ENCODE measurements at regions of chr7 and their contacts with region 1.

Region 1: DNA sequence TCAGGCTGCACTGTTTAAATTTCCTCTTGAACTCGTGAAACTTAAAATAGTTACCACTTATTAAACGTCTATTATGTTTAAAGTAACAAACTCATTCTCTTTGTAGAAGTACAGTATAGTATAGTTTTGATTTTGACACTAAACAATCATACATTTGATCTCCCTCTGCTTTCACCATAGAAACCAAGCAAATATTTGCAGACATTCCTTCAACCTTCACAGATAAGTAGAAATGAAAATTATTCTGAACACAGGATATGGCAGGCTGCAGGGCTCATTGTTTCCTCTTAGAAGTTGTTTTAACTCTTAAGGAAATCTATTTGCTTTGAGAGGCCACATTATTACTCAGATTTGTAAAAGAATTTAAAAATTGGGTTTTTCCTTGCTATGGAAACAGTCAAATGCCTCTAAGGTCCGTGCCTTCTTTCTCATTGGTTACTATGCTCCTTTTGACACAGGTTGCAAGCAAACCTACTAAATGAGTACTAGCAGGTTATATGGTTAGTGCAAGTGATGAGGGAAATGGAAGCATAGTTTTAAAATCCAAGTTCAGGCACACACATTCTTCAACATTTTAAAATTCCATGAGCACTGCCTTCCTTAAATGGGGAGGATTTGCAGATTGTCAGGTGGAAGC is 92.8 kb upstream of the FAM133B start:
- DNase-seq: peak; percentile 75
- H3K4me3 Mint-ChIP-seq: peak overlapping the region; percentile 47
- H3K27ac Mint-ChIP-seq: peak overlapping the region; percentile 96
- H3K4me1 Mint-ChIP-seq: peaks cover 79% of the 10 kb centered on the region
- H3K27me3 Mint-ChIP-seq: no peaks in the 10 kb centered on the region

Region 2: GRCh38 chr7:92336662-92337340 is 346.2 kb before region 1 on chr7:
- intact Hi-C with region 1: no loop called
- DNase-seq: no peak
- H3K4me3 Mint-ChIP-seq: no peak overlapping the region
- H3K27ac Mint-ChIP-seq: no peak overlapping the region
- H3K4me1 Mint-ChIP-seq: no peaks in the 10 kb centered on the region
- H3K27me3 Mint-ChIP-seq: no peaks in the 10 kb centered on the region

Region 3: GRCh38 chr7:92598310-92598981 is 84.6 kb before region 1 on chr7:
- intact Hi-C with region 1: no loop called
- DNase-seq: no peak
- H3K4me3 Mint-ChIP-seq: no peak overlapping the region
- H3K27ac Mint-ChIP-seq: no peak overlapping the region
- H3K4me1 Mint-ChIP-seq: peaks cover 4% of the 10 kb centered on the region
- H3K27me3 Mint-ChIP-seq: no peaks in the 10 kb centered on the region

Region 4: DNA sequence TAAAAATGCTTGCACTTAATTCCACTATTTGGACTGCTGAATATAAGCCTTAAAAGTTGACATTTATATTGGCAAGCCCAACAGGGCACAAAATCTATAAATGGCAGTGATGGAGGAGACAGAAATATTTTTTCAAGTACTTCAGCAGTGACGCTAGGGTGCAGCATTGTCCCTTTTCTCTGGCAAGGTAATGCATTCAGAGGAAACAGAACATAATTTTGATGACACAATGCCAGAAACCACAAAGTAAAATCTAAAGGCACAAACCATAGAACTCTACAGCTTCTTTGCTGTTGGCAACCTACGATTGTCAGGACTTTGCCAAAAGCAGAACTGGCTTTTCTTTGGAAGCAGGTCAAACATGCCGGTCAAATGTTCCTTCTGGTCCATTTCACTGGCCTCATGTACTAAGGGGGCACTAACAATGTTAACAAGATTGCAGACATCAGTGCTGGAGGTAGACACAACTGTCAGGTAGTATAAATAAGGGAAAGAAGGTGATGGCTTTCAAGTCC is 61.9 kb before region 1 on chr7:
- intact Hi-C with region 1: loop called (anchors 1 kb)
- DNase-seq: peak; percentile 93
- H3K4me3 Mint-ChIP-seq: peak overlapping the region; percentile 71
- H3K27ac Mint-ChIP-seq: peak overlapping the region; percentile 95
- H3K4me1 Mint-ChIP-seq: peaks cover 46% of the 10 kb centered on the region
- H3K27me3 Mint-ChIP-seq: no peaks in the 10 kb centered on the region

Region 5: GRCh38 chr7:92641921-92642511 is 41.0 kb before region 1 on chr7:
- intact Hi-C with region 1: loop called (anchors 2 kb)
- DNase-seq: peak; percentile 87
- H3K4me3 Mint-ChIP-seq: peak overlapping the region; percentile 77
- H3K27ac Mint-ChIP-seq: peak overlapping the region; percentile 97
- H3K4me1 Mint-ChIP-seq: peaks cover 81% of the 10 kb centered on the region
- H3K27me3 Mint-ChIP-seq: no peaks in the 10 kb centered on the region

Region 6: GRCh38 chr7:92648067-92648466 is 35.0 kb before region 1 on chr7:
- intact Hi-C with region 1: loop called (anchors 1 kb)
- DNase-seq: no peak
- H3K4me3 Mint-ChIP-seq: peak overlapping the region; percentile 70
- H3K27ac Mint-ChIP-seq: peak overlapping the region; percentile 97
- H3K4me1 Mint-ChIP-seq: peaks cover 78% of the 10 kb centered on the region
- H3K27me3 Mint-ChIP-seq: no peaks in the 10 kb centered on the region

Region 7: DNA sequence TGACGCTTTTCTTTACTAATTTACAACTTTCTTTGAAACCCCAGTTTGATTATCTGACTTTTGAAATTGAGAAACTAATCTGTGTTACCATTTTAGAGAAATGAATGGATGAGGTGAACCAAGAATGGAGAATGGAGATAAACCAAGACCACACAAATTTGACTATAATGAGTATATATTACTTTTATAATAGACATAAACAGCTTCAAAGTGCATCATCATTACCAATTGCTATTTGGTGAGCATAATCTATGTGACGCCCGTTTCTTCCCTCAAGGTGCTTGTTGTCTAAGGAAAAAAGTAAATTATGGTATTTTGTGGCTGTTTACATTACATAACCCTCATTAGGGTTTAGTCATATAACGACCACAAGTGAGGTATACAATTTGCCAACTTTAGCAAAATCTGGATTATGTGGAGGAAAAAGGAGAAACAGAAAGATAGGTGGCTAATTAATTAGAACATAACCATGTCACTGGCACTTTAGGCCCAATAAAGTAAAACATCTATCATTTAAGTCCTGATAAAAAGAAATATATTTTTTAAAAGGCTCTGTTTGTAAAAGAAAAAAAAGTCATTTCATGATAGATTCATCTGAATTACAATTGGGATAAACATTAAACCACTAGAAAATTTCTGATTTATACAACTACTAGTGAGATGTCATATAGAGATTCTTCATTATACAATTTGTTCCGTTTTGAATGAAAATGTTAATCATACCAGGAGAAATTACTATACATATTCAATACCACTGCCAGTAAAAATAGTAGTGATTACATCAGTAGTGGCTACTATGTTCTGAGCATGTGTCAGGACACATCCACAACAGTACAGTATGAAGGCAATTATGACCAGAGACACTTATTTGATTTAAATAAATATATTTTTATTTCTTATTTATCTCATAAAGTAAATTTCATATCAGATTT is 25.4 kb after region 1 on chr7:
- intact Hi-C with region 1: loop called (anchors 1 kb)
- DNase-seq: no peak
- H3K4me3 Mint-ChIP-seq: no peak overlapping the region
- H3K27ac Mint-ChIP-seq: peak overlapping the region; percentile 79
- H3K4me1 Mint-ChIP-seq: peaks cover 34% of the 10 kb centered on the region
- H3K27me3 Mint-ChIP-seq: no peaks in the 10 kb centered on the region

Region 8: DNA sequence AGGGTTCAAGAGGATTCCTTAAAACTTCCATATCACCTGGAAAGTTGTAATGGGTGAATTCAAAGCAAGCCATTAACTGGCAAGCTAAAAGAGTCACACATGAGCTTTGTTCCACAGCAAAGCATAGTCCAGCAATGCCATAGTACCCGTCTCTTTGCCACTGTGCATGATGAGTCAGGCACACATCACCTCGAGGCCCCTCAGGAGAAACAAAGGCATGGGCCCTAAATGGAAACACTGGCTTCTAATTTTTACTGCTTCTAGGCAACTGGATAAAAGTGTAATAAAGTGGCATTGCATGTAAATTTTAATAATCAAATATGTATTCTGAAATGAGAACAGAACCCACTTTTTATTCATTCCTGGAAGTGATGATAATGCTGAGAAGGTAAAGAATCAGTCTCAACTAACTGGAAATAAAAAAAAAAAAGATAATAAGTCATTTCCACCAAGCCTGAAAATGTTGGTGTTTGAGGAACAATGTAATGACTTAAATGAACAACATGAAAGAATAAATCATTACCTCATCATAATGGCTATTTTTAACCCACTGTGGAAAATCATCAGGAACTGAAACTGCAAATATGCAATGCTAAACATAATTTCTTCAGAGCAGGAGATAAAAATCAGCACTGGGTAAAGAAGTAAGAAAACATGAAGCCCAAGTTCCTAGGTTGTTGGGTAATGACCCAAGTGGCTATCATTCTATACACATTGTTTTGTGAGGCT is 48.5 kb after region 1 on chr7:
- intact Hi-C with region 1: loop called (anchors 1 kb)
- DNase-seq: no peak
- H3K4me3 Mint-ChIP-seq: peak overlapping the region; percentile 64
- H3K27ac Mint-ChIP-seq: peak overlapping the region; percentile 95
- H3K4me1 Mint-ChIP-seq: peaks cover 54% of the 10 kb centered on the region
- H3K27me3 Mint-ChIP-seq: no peaks in the 10 kb centered on the region

Region 9: GRCh38 chr7:93117852-93118530 is 435.0 kb after region 1 on chr7 and contains the start of gene SAMD9:
- intact Hi-C with region 1: loop called (anchors 10 kb)
- DNase-seq: peak; percentile 90
- H3K4me3 Mint-ChIP-seq: peak within 1 kb of the TSS; percentile 90
- H3K27ac Mint-ChIP-seq: peak within 1 kb of the TSS; percentile 90
- H3K4me1 Mint-ChIP-seq: peaks cover 54% of the 10 kb centered on the region
- H3K27me3 Mint-ChIP-seq: no peaks in the 10 kb centered on the region
- total RNA-seq, gene SAMD9: 8.6 and 9.4 TPM in 2 replicates